Activated T-helper 1 cell treated with anti-CD3 and anti-CD28 coated beads, Interleukin-12 subunit alpha, Interleukin-12 subunit beta, Interleukin-2, Interleukin-4 antibody, amounts not matched to agents 30 ng/mL and 10 ng/mL and 1 ng/mL, durations not matched to agents 14 hours and 24 hours and 36 hours (primary cell): ENCODE measurements at regions of chr11 and their contacts with region 1.

Region 1: GRCh38 chr11:86740709-86741483 is 59.4 kb upstream of the PRSS23 start:
- DNase-seq: no peak
- H3K4me3 Mint-ChIP-seq: no peak overlapping the region
- H3K27ac Mint-ChIP-seq: no peak overlapping the region
- H3K4me1 Mint-ChIP-seq: peaks cover 41% of the 10 kb centered on the region
- H3K27me3 Mint-ChIP-seq: no peaks in the 10 kb centered on the region

Region 2: DNA sequence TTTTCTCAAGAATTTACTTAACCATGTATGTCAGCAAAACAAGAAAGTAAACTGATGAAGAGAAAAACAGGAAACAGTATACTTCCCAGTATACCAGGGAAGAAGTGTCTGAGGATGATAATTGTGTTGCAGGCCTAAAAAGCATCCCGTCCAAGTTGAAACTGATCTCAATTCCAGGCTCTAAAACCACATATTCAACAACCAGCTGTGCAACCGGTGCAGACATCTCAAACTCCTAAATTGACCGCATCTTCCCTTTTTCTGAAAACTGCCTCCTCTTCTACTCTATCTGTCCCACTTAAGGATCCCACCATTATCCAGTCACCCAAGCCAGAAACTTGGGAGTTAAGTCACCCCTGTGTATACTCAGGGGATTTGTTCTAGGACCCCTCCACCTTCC is 838.5 kb before region 1 on chr11:
- intact Hi-C with region 1: no loop called
- DNase-seq: no peak
- H3K4me3 Mint-ChIP-seq: no peak overlapping the region
- H3K27ac Mint-ChIP-seq: no peak overlapping the region
- H3K4me1 Mint-ChIP-seq: no peaks in the 10 kb centered on the region
- H3K27me3 Mint-ChIP-seq: peaks cover 10% of the 10 kb centered on the region

Region 3: GRCh38 chr11:86447763-86448480 is 293.0 kb before region 1 on chr11:
- intact Hi-C with region 1: loop called (anchors 2 kb)
- DNase-seq: peak; percentile 31
- H3K4me3 Mint-ChIP-seq: peak overlapping the region; percentile 48
- H3K27ac Mint-ChIP-seq: no peak overlapping the region
- H3K4me1 Mint-ChIP-seq: peaks cover 43% of the 10 kb centered on the region
- H3K27me3 Mint-ChIP-seq: no peaks in the 10 kb centered on the region

Region 4: DNA sequence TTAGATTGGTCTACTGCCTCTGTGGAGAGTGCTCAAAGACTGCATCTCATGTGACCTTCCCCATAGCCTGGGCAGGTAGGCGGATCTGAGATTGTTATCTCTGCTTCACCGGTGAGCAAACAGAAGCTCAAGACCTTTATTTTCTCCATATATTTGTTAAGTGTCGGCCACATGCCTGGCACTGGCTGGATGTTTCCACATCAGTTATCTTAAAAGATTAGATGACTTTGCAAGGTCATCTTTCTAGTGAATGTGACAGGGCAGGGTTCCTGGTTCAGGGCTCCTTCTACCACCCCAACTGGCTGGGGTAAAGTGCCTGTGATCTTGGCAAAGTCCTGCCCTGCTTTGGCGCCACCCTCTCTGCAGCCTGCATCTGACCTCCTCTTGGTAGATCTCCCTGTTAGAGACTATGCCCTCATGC is 241.2 kb before region 1 on chr11:
- intact Hi-C with region 1: loop called (anchors 5 kb)
- DNase-seq: no peak
- H3K4me3 Mint-ChIP-seq: no peak overlapping the region
- H3K27ac Mint-ChIP-seq: no peak overlapping the region
- H3K4me1 Mint-ChIP-seq: no peaks in the 10 kb centered on the region
- H3K27me3 Mint-ChIP-seq: peaks cover 11% of the 10 kb centered on the region

Region 5: GRCh38 chr11:86637988-86638387 is 102.9 kb before region 1 on chr11:
- intact Hi-C with region 1: loop called (anchors 2 kb)
- DNase-seq: peak; percentile 40
- H3K4me3 Mint-ChIP-seq: no peak overlapping the region
- H3K27ac Mint-ChIP-seq: peak overlapping the region; percentile 33
- H3K4me1 Mint-ChIP-seq: peaks cover 51% of the 10 kb centered on the region
- H3K27me3 Mint-ChIP-seq: peaks cover 20% of the 10 kb centered on the region

Region 6: DNA sequence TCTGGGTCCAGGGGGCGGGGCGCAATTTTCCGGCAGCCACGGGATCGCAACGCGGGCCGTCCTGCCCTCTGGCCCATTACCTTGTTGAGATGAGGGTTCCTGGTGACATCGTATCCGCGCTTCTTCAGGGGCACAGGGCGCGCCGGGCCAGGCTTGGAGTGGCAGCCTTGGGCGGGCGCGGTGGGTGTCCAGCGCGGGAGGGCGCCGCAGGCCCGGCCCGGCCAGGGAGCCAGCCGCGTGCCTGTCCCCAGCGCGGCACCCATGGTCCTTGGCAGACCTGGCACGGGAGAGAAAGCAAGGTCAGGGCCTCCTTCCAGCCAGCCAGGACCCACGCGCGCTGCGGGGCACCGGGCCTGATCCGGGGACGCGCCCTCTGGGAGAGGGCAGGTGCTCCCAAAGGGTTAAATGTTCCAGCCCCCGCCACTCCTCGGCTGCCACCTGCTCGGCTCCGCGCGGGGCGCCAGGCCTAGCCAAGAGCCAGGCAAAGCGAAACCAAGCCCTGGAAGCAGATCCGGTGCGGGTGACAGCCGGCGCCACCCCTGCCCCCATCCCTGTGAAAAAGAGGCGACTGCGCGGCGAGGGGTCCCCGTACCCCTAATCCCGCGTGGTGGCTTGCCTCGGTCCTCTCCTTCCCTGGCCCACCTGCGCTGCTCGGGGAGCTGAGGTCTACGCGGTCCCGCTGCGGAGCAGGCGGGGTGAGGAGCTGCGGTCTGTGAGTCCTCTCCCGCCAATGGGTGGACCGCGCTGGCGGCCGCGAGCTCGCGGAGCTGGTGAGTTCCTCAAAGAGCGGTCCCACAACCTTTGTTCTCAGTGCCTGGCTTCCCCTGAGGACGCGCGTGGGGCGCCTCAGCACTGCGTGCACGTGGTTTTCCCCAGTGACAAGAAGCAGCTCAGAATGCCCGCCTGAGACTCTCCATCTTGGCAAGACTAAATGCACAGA is 68.9 kb before region 1 on chr11 and contains the start of gene ME3:
- intact Hi-C with region 1: loop called (anchors 2 kb)
- DNase-seq: peak; percentile 47
- H3K4me3 Mint-ChIP-seq: peak within 1 kb of the TSS; percentile 83
- H3K27ac Mint-ChIP-seq: peak within 1 kb of the TSS; percentile 79
- H3K4me1 Mint-ChIP-seq: peaks cover 18% of the 10 kb centered on the region
- H3K27me3 Mint-ChIP-seq: peaks cover 31% of the 10 kb centered on the region
- total RNA-seq, gene ME3: 12.8 and 13.1 TPM in 2 replicates

Region 7: DNA sequence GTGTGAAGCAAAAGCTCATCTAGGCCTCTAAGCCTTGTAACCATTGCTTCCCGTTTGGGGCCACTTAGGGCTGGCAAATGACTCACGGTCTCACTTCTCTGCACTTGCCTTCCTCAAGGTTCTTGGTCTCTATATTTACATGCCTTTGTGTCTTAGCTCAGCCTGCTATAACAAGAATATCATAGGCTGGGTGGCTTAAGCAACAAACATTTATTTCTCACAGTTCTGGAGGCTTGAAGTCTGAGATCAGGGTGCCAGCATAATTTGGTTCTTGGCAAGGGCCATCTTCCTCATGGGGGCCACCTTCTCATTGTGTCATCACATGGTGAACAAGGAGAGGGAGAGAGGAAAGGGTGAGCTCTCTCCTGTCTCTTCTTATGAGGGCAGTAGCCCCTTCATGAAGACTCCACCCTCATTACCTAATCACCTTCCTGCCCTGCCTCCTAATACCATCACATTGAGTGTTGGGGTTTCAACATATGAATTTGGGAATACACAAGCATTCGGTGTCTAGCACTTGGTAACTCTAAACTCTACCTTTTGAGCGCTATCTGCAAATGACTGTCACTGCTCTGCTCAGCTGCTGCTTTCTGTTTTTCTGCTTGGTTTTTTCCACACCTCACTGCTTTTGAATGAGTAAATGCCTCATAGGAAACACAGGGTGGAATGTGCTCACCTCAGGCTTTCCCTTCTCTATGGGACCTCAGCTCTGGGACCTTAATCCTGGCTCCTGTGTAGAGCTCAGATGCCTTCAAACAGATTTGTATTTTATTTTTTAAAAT is 52.3 kb before region 1 on chr11:
- intact Hi-C with region 1: loop called (anchors 1 kb)
- DNase-seq: peak; percentile 12
- H3K4me3 Mint-ChIP-seq: peak overlapping the region; percentile 60
- H3K27ac Mint-ChIP-seq: peak overlapping the region; percentile 92
- H3K4me1 Mint-ChIP-seq: peaks cover 26% of the 10 kb centered on the region
- H3K27me3 Mint-ChIP-seq: peaks cover 8% of the 10 kb centered on the region

Region 8: DNA sequence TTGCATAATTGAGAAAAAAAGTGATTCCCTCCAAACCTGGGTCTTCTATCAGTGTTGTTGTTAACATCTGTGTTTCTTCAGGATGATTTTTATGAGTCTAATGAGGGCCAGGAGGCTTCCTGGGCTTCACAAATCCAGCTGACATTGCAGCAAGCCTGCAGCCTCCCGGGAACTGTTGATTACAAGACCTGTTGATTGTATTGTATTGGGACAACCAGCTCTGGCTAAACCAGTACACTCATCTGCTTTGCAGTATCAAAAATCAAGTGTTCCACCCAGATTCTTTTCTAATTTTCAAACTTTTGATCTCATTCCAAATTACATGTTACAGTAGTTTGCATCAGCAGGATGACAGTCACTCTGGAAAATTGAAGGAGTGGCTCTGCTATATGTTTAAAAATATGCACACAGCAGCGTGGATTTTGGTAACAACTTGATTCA is 43.4 kb after region 1 on chr11:
- intact Hi-C with region 1: no loop called
- DNase-seq: no peak
- H3K4me3 Mint-ChIP-seq: no peak overlapping the region
- H3K27ac Mint-ChIP-seq: no peak overlapping the region
- H3K4me1 Mint-ChIP-seq: no peaks in the 10 kb centered on the region
- H3K27me3 Mint-ChIP-seq: peaks cover 40% of the 10 kb centered on the region

Region 9: GRCh38 chr11:86955361-86956120 is 214.6 kb after region 1 on chr11 and contains the start of gene FZD4:
- intact Hi-C with region 1: no loop called
- DNase-seq: peak; percentile 51
- H3K4me3 Mint-ChIP-seq: peak within 1 kb of the TSS; percentile 95
- H3K27ac Mint-ChIP-seq: no peak within 1 kb of the TSS
- H3K4me1 Mint-ChIP-seq: peaks cover 8% of the 10 kb centered on the region
- H3K27me3 Mint-ChIP-seq: peaks cover 59% of the 10 kb centered on the region
- total RNA-seq, gene FZD4: 0.05 TPM in 1 of 2 replicates, not detected in the other